HepG2 (cell line): ENCODE measurements at regions of chr1 and their contacts with region 1.

Region 1: DNA sequence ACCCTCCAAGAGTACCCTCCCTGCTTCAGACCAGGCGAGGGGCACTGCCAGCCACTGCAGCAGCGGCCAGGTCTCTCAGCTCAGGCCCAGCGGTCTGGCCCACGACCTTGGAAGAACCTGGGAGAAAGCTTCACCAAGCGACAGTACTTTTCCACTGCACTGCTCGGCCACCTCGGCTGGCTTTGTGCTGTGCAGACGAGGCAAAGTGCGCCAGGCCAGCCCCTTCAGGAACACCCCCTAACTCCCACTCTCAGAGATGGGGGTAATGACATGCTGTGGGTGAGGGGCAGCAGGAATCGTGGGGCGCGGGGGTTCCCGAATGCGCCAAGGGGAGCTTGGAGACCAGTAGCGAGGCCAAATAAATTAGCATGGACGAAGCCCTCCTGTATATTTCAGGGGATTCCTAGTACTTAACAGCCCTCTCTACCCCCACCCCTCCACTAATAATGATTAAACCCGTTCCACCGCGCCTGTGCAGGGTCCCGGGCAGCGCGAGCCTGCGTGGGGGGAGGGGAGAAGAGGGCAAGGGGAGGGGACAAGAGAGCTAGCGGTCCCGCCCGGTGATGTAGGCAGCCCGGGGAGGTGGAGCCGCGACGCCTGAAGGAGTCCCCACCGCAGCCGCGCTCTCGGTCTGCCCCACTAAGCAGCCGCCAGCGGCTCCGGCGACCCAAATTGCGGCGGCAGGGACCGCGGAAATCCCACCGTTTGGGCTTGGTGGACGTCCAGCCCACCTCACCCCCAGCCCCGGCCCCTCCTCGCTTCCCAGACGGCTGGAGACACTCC is at the start of gene FAM43B:
- DNase-seq: peak; percentile 88
- ATAC-seq: peak; percentile 93
- H3K4me3 ChIP-seq: peak within 1 kb of the TSS; percentile 57 to 81 (median 75)
- H3K27ac ChIP-seq: peak within 1 kb of the TSS; percentile 95
- H3K4me1 ChIP-seq: peaks cover 34% of the 10 kb centered on the region
- H3K27me3 ChIP-seq: no peaks in the 10 kb centered on the region
- CTCF ChIP-seq: no peak
- EP300 ChIP-seq: peak in 1 of 2 experiments; percentile 46; a peak in 1 of 4 replicates
- POLR2A ChIP-seq: peak; percentile 95 to 96
- RAD21 ChIP-seq: no peak
- total RNA-seq, gene FAM43B: 3.2 and 3.7 TPM in 2 replicates

Region 2: DNA sequence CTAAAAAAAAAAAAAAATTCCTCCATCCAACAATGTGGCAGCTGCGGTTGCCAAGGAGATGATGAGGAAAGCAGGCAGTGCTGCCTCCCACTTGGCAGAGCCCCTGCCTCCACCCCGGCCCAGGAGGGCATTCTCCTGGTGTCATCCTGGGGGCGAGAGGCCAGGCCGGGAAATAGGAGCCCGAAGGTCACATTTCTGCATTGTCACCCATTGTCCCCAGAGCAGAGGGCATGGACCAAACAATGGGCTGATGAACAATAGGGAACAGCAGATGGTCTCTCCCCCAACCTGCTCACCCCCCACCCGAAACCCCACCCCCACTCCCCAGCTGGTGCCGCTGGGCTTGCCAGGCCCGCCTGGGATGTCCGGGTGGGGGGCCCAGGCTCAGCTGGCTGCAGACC is 103.5 kb before region 1 on chr1:
- CTCF ChIA-PET with region 1: no interaction called
- POLR2A ChIA-PET with region 1: no interaction called
- in situ Hi-C with region 1: no loop called
- intact Hi-C with region 1: no loop called
- DNase-seq: no peak
- ATAC-seq: no peak
- H3K4me3 ChIP-seq: no peak overlapping the region
- H3K27ac ChIP-seq: no peak overlapping the region
- H3K4me1 ChIP-seq: peaks cover 13% of the 10 kb centered on the region
- H3K27me3 ChIP-seq: peaks cover 1 to 5% of the 10 kb centered on the region in 2 experiments; a peak in 1 of 5 replicates
- CTCF ChIP-seq: no peak
- EP300 ChIP-seq: no peak
- POLR2A ChIP-seq: no peak
- RAD21 ChIP-seq: no peak

Region 3: DNA sequence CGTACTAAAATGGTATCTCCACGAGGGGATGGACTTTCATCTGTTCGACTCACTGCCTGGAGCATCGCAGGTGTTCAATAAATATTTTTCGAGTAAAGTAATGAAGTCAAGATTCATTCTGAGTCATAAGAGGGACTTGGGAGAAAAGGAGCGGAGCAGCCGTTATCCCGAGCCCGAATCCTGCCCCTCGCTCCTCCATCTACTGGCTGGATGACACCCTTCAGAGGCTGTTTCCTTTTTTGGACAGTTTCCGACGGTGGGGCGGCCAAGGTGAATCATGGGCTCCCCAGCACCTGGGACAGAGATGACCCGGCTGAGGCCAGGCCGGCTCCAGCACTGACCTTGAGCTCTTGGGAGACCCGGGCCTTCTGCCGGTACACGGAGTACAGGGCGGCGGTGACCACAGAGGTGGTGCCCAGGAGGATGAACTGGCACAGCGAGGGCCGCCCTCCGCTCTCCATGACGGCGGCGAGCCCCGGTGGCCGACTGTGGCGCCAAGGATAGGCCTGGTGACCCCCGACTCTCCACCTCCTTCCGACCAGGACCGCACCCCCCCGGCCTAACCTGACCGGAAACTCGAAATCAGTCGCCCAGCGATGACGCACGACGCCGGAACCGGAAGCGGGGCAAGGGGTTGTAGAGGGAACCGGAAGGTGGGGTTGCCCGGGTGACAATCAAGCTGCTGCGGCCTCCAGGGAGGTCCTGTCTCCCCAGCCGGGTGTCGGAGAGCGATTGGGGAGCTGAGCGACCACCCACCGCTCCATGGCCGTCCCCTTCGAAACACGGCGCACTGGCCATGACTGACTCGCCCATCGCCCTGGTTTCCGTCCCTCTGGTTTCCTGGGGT is 44.3 kb before region 1 on chr1 and contains the start of gene MUL1:
- CTCF ChIA-PET with region 1: no interaction called
- POLR2A ChIA-PET with region 1: interaction called, 12 read pairs
- in situ Hi-C with region 1: no loop called
- intact Hi-C with region 1: no loop called
- DNase-seq: peak; percentile 89
- ATAC-seq: peak; percentile 95
- H3K4me3 ChIP-seq: peak within 1 kb of the TSS; percentile 74 to 96 (median 89)
- H3K27ac ChIP-seq: peak within 1 kb of the TSS; percentile 71
- H3K4me1 ChIP-seq: peaks cover 21% of the 10 kb centered on the region
- H3K27me3 ChIP-seq: peaks cover 0 to 10% of the 10 kb centered on the region in 2 experiments; a peak in 3 of 5 replicates
- CTCF ChIP-seq: no peak
- EP300 ChIP-seq: no peak
- POLR2A ChIP-seq: peak; percentile 73 to 82
- RAD21 ChIP-seq: peak; percentile 36; the same call in 1 of the 2 replicates
- total RNA-seq, gene MUL1: 13.5 and 26.5 TPM in 2 replicates

Region 4: DNA sequence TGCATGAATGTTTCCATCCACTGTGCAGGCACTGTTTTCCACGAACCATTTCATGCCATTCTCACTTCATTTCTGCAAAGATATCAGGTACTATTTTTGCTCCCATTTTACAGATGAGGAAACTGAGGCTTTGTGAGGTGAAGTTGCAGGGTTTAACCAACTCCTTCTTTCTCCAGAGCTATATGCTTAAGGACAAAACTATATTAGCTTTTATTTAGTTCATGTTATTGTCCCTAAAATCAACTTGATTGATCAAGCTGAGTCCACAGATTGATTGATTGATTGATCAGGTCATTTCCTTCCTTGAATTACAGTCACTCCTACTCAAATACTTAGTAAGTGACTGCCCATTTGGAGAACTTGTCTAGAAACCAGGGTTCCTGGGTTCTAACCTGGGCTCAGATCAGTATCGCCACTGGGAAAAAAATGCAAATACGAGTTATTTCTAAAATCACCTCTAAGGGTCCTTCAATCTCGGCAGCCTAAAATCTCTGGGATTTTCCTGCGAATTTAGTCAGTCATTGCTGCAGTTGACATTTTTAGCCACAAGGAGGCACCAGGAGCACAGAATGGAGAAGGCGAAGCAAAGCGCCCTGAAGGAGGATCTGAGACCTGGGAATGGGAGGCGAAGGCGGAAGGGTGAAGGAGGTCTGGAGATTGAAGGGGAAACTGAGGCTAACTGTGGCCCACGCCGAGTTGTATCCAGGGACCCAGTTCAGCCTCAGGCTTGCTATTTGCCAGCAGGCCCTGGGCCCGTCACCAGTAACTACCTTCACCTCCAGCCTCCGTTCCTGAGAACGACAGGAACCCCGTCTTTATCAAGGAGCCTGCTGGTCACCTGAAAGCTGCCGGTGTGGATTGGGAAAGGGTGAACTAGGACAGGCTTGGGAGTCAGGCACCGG is 29.9 kb before region 1 on chr1:
- CTCF ChIA-PET with region 1: no interaction called
- POLR2A ChIA-PET with region 1: interaction called, 6 read pairs
- in situ Hi-C with region 1: no loop called
- intact Hi-C with region 1: loop called (anchors 2 kb)
- DNase-seq: peak; percentile 57
- ATAC-seq: peak; percentile 54
- H3K4me3 ChIP-seq: no peak overlapping the region
- H3K27ac ChIP-seq: no peak overlapping the region
- H3K4me1 ChIP-seq: peaks cover 5% of the 10 kb centered on the region
- H3K27me3 ChIP-seq: 0 out of 5 replicates have a peak, but pooled peaks cover 0 to 2% of the 10 kb centered on the region in 2 experiments
- CTCF ChIP-seq: peak; percentile 93
- EP300 ChIP-seq: no peak
- POLR2A ChIP-seq: no peak
- RAD21 ChIP-seq: peak; percentile 86

Region 5: DNA sequence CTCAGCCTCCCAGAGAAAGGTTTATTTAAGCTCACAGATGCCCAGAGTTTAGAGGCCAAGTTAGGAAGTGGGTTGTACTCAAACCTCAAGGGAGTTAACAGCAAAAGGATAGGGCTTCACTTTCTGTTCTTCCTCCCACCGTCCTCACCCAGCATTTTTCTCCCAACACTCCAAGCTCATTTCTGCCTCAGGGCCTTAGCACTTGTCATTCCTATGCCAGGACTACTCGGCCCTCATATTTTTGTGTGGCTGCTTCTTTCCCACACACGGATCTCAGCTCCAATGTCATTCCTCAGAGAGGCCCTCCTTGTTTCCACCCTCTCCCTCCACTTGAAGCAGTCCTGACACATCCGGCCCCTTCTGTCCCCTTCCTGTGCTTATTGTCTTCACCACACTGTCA is 13.1 kb after region 1 on chr1:
- CTCF ChIA-PET with region 1: no interaction called
- POLR2A ChIA-PET with region 1: interaction called, 10 read pairs
- in situ Hi-C with region 1: no loop called
- intact Hi-C with region 1: no loop called
- DNase-seq: no peak
- ATAC-seq: no peak
- H3K4me3 ChIP-seq: no peak overlapping the region
- H3K27ac ChIP-seq: no peak overlapping the region
- H3K4me1 ChIP-seq: peaks cover 8% of the 10 kb centered on the region
- H3K27me3 ChIP-seq: peaks cover 4 to 17% of the 10 kb centered on the region in 2 experiments; a peak in 2 of 5 replicates
- CTCF ChIP-seq: no peak
- EP300 ChIP-seq: no peak
- POLR2A ChIP-seq: no peak
- RAD21 ChIP-seq: no peak

Region 6: DNA sequence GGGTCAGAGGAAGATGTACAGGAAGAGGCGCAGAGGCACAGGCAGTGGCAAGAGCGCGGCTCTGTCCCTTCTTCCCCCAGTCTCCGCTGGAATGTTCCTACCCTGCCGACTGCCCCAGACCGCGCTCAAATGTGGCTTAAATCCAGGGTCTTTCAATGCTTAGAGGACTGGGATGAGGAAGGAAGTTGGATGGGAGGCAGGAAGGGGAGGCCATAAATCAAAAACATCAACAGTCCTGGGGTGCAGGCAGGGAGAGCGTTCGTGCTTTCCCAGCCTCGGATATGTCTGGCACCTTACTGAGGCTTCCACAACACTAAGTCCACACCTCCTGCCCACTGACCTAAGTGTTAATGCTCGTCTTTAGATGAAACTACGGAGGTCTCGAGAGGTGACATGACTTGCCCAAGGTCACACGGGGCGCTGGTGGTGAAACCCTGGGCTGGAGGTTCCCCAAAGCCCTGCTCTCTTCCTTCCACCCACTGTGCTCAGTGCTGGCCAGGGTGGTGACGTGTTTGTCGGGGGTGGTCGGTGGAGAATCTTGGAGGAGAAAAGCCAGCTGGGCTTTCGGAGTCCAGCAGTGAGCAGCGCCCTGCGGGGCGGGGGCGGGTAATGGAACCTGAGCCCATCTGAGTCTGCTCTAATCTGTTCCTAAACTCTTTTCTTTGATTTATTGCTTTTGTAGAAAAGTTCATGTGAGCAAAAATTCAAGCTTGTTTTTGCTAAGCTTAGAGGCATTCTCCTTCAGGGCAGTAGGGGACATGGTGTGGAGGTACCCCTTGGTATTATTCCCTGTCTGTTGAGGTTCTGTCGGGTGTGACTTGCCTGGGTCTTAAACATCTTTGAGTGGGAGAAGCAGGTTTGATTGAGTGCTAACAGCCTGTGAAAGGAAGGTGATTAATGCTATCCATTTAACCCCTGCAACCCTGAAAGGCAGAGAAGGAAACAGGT is 37.5 kb after region 1 on chr1:
- CTCF ChIA-PET with region 1: no interaction called
- POLR2A ChIA-PET with region 1: interaction called, 23 read pairs
- in situ Hi-C with region 1: no loop called
- intact Hi-C with region 1: no loop called
- DNase-seq: no peak
- ATAC-seq: peak; percentile 57
- H3K4me3 ChIP-seq: peak overlapping the region in 2 of 3 experiments; percentile 42 to 52; a peak in 3 of 6 replicates
- H3K27ac ChIP-seq: no peak overlapping the region
- H3K4me1 ChIP-seq: peaks cover 34% of the 10 kb centered on the region
- H3K27me3 ChIP-seq: peaks cover 1 to 15% of the 10 kb centered on the region in 2 experiments; a peak in 3 of 5 replicates
- CTCF ChIP-seq: no peak
- EP300 ChIP-seq: no peak
- POLR2A ChIP-seq: no peak
- RAD21 ChIP-seq: no peak

Region 7: GRCh38 chr1:20661207-20662109 is 109.3 kb after region 1 on chr1 and contains the start of gene DDOST:
- CTCF ChIA-PET with region 1: no interaction called
- POLR2A ChIA-PET with region 1: interaction called, 19 read pairs
- in situ Hi-C with region 1: no loop called
- intact Hi-C with region 1: no loop called
- DNase-seq: peak; percentile 98
- ATAC-seq: peak; percentile 95
- H3K4me3 ChIP-seq: peak within 1 kb of the TSS; percentile 77 to 98 (median 89)
- H3K27ac ChIP-seq: peak within 1 kb of the TSS; percentile 66
- H3K4me1 ChIP-seq: peaks cover 47% of the 10 kb centered on the region
- H3K27me3 ChIP-seq: no peaks in the 10 kb centered on the region; a peak in 1 of 5 replicates
- CTCF ChIP-seq: peak; percentile 76
- EP300 ChIP-seq: no peak
- POLR2A ChIP-seq: peak; percentile 62 to 84; a peak in 3 of 4 replicates
- RAD21 ChIP-seq: no peak
- total RNA-seq, gene DDOST: 167 and 335 TPM in 2 replicates